HEK293 (cell line): ENCODE measurements at regions of chr17 and their contacts with region 1.

Region 1: DNA sequence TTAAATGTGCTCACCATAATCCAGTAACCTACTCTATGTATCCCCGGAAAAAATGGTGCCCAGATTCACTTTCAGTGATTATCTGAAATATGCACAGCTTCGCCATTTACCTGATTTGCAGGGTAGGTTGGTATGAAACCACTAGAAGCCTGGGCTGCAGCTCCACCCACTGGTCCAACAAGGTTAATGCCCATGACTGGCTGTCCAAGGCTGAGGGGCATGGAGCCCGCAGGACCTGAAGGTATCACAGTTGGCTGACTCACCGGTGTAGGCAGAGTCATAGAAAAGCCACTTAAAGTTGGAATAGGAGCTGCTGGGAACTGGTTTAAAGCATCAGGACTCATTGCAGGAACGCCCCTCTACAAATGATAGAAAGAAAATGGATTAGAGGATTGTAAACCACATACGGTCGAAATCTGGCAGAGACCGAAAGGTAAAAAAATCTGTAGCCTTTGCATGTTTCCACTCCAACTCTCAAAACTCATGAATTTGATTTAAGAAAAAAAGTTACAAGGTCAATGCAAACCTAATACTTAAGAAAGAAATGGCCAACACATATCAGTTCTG is 38.6 kb downstream of the SYNRG start:
- H3K4me3 ChIP-seq: no peak overlapping the region
- H3K27ac ChIP-seq: no peak overlapping the region
- H3K4me1 ChIP-seq: peaks cover 10% of the 10 kb centered on the region
- CTCF ChIP-seq: peak; percentile 82

Region 2: GRCh38 chr17:37246085-37246484 is 324.5 kb before region 1 on chr17:
- CTCF ChIA-PET with region 1: no interaction called
- POLR2A ChIA-PET with region 1: no interaction called
- H3K4me3 ChIP-seq: no peak overlapping the region
- H3K27ac ChIP-seq: no peak overlapping the region
- H3K4me1 ChIP-seq: no peaks in the 10 kb centered on the region
- CTCF ChIP-seq: no peak

Region 3: GRCh38 chr17:37592291-37592690 is 21.7 kb after region 1 on chr17:
- CTCF ChIA-PET with region 1: interaction called, 12 read pairs
- POLR2A ChIA-PET with region 1: no interaction called
- H3K4me3 ChIP-seq: no peak overlapping the region
- H3K27ac ChIP-seq: no peak overlapping the region
- H3K4me1 ChIP-seq: no peaks in the 10 kb centered on the region
- CTCF ChIP-seq: no peak